H1 (cell line): ENCODE measurements at regions of chr14 and their contacts with region 1.

Region 1: DNA sequence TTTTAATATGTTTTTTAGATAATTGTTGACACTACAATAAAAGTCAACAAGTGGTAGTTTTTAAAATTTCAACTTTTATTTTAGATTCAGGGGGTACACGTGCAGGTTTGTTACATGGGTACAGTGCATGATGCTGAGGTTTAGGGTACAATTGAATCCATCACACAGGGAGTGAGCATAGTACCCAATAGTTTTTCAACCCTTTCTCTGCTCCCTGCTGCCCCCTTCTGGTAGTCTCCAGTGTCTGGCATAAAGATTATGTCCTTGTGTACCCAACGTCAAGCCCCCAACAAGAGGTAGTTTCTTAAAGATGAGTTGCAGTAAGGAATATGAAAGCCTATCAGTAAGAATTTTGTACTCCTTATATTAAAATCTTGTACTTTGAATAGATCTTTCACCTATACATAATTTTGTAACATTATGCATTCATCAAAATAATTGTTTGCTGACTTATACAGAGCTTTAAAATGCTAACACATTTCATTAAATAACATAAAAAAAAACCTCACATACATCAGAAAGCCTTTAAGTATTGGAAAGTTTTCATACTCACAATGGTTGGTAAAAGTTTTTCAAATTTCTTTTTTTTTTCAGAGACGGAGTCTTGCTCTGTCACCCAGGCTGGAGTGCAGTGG is 5.4 kb upstream of the RALGAPA1 start:
- DNase-seq: peak in 1 of 2 experiments; percentile 91
- H3K4me3 ChIP-seq: no peak overlapping the region
- H3K27ac ChIP-seq: no peak overlapping the region
- H3K4me1 ChIP-seq: no peaks in the 10 kb centered on the region
- H3K27me3 ChIP-seq: no peaks in the 10 kb centered on the region
- CTCF ChIP-seq: peak; percentile 31 to 83 (median 58)
- EP300 ChIP-seq: no peak
- POLR2A ChIP-seq: no peak
- RAD21 ChIP-seq: peak; percentile 39 to 55

Region 2: DNA sequence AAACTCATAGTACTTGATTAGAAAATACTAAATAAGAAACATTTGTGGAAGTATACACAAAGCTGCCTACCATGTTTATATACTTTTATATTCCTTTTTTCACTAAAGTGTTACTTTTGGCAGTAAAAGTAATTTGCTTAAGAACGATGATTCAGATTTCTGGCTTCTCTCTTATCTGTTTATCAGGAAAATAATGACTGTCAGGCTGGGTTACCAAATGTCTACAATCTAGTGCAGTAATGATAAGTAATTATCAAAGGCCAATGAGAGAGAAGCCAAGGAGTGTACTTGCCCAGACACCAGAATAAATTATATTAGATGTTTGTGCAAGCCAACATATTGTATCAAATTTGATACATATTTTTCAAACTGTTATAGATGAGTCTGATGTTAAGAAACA is 118.8 kb before region 1 on chr14:
- CTCF ChIA-PET with region 1: interaction called, 12 read pairs
- POLR2A ChIA-PET with region 1: no interaction called
- DNase-seq: no peak
- H3K4me3 ChIP-seq: no peak overlapping the region
- H3K27ac ChIP-seq: no peak overlapping the region
- H3K4me1 ChIP-seq: peaks cover 0 to 2% (median under 1%) of the 10 kb centered on the region in 4 experiments; a peak in 1 of 7 replicates
- H3K27me3 ChIP-seq: no peaks in the 10 kb centered on the region
- CTCF ChIP-seq: no peak
- EP300 ChIP-seq: no peak
- POLR2A ChIP-seq: no peak
- RAD21 ChIP-seq: no peak

Region 3: DNA sequence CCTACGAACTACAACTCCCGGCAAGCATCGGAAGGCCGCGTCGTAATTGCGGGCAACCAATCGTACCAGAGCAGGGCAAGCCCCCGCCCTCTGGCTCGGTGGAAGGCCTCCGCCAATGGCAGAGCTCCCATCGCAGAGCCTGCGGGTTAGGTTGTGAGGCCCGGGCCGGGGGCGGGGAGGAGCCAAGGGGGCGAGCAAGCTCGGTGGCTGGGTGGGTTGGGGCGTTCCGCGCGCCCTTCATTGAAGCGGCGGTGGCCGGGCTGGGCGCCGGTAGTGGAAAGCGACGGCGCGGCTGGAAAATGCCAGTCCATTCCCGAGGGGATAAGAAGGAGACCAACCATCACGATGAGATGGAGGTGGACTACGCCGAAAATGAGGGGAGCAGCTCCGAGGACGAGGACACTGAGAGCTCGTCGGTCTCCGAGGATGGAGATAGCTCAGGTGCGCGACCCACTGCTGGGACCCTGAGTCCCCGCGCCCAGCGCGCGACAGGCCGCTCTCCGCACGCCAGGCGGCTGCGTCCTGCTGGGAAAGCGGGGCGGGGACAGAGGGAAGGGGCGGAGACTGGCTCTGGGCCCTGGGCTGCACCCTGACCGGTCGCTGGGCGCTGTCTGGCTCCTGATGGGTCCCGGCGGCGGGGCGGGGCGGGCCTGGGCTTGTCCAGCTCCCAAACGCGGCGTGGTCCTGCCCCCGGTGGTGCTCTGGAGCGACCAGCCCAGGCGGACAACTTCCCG is 11.9 kb after region 1 on chr14 and contains the start of gene BRMS1L:
- CTCF ChIA-PET with region 1: interaction called, 18 read pairs
- POLR2A ChIA-PET with region 1: interaction called, 6 read pairs
- DNase-seq: peak; percentile 96 to 99
- H3K4me3 ChIP-seq: peak within 1 kb of the TSS; percentile 88 to 95 (median 90)
- H3K27ac ChIP-seq: peak within 1 kb of the TSS; percentile 94
- H3K4me1 ChIP-seq: peaks cover 0 to 3% (median 0%) of the 10 kb centered on the region in 4 experiments; a peak in 3 of 7 replicates
- H3K27me3 ChIP-seq: no peaks in the 10 kb centered on the region
- CTCF ChIP-seq: no peak
- EP300 ChIP-seq: no peak
- POLR2A ChIP-seq: peak; percentile 84
- RAD21 ChIP-seq: no peak
- total RNA-seq, gene BRMS1L: 10.9 and 11.8 TPM in 2 replicates